ENCODE measurements at regions of chr2 and their contacts with region 1.

Region 1: DNA sequence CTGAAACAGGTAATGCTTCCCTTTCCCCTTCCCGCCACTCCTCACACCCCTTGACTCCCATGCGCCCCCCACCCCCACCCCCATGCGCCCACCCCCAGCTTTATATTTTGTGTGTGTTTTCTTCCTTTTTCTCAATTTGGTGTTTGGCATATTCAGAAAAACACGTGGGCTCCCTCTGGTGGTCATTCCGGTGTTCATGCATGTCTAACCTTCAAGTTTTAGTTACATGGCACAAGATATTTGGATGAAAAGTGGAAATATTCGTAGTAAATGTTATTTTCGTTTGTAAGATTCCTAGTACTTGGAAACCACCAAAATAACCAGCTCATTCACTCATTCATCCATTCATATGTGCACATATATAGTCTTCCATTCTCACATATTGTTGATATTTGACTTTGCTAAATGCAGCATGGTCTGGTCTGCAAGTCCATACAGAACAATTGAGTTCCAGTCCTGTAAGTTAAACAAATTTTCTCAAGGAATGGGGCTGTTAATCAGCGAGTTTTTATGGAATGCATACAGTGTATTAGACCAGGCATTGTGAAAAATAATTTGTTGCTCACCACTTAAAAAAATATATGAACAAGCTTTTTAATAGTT is 143.6 kb upstream of the MAP3K20 start:
- DNase-seq: peak; percentile 10 to 68
- ATAC-seq: peak; percentile 69 to 85; a peak in 3 of 6 replicates
- H3K4me3 ChIP-seq: no peak overlapping the region
- H3K27ac ChIP-seq: no peak overlapping the region
- H3K4me1 ChIP-seq: peaks cover 9% of the 10 kb centered on the region; the same call in 2 of the 3 replicates
- CTCF ChIP-seq: peak; percentile 83
- EP300 ChIP-seq: no peak
- POLR2A ChIP-seq: no peak
- RAD21 ChIP-seq: peak; percentile 81 to 88

Region 2: GRCh38 chr2:172667581-172668325 is 264.3 kb before region 1 on chr2:
- CTCF ChIA-PET with region 1: no interaction called
- POLR2A ChIA-PET with region 1: no interaction called
- DNase-seq: no peak
- ATAC-seq: no peak
- H3K4me3 ChIP-seq: no peak overlapping the region
- H3K27ac ChIP-seq: no peak overlapping the region
- H3K4me1 ChIP-seq: peaks cover 25% of the 10 kb centered on the region
- CTCF ChIP-seq: no peak
- EP300 ChIP-seq: no peak
- POLR2A ChIP-seq: no peak
- RAD21 ChIP-seq: no peak

Region 3: GRCh38 chr2:172806493-172806892 is 125.5 kb before region 1 on chr2:
- CTCF ChIA-PET with region 1: interaction called, 74 read pairs
- POLR2A ChIA-PET with region 1: no interaction called
- DNase-seq: peak; percentile 18 to 68
- ATAC-seq: peak; percentile 73 to 74; a peak in 5 of 6 replicates
- H3K4me3 ChIP-seq: no peak overlapping the region
- H3K27ac ChIP-seq: no peak overlapping the region
- H3K4me1 ChIP-seq: no peaks in the 10 kb centered on the region
- CTCF ChIP-seq: peak; percentile 93
- EP300 ChIP-seq: no peak
- POLR2A ChIP-seq: no peak
- RAD21 ChIP-seq: peak; percentile 91 to 95

Region 4: GRCh38 chr2:172864182-172864581 is 67.8 kb before region 1 on chr2:
- CTCF ChIA-PET with region 1: interaction called, 15 read pairs
- POLR2A ChIA-PET with region 1: no interaction called
- DNase-seq: peak in 1 of 2 experiments; percentile 64
- ATAC-seq: peak; percentile 59 to 89; a peak in 3 of 6 replicates
- H3K4me3 ChIP-seq: no peak overlapping the region
- H3K27ac ChIP-seq: no peak overlapping the region
- H3K4me1 ChIP-seq: no peaks in the 10 kb centered on the region; the same call in 2 of the 3 replicates
- CTCF ChIP-seq: peak; percentile 65
- EP300 ChIP-seq: no peak
- POLR2A ChIP-seq: no peak
- RAD21 ChIP-seq: peak; percentile 75 to 86

Region 5: GRCh38 chr2:172905937-172906811 is 25.8 kb before region 1 on chr2:
- CTCF ChIA-PET with region 1: interaction called, 14 read pairs
- POLR2A ChIA-PET with region 1: no interaction called
- DNase-seq: no peak
- ATAC-seq: no peak
- H3K4me3 ChIP-seq: no peak overlapping the region
- H3K27ac ChIP-seq: no peak overlapping the region
- H3K4me1 ChIP-seq: no peaks in the 10 kb centered on the region
- CTCF ChIP-seq: no peak
- EP300 ChIP-seq: no peak
- POLR2A ChIP-seq: no peak
- RAD21 ChIP-seq: no peak

Region 6: GRCh38 chr2:172943539-172943938 is 11.5 kb after region 1 on chr2:
- CTCF ChIA-PET with region 1: interaction called, 12 read pairs
- POLR2A ChIA-PET with region 1: no interaction called
- DNase-seq: no peak
- ATAC-seq: no peak
- H3K4me3 ChIP-seq: no peak overlapping the region
- H3K27ac ChIP-seq: no peak overlapping the region
- H3K4me1 ChIP-seq: no peaks in the 10 kb centered on the region
- CTCF ChIP-seq: no peak
- EP300 ChIP-seq: no peak
- POLR2A ChIP-seq: no peak
- RAD21 ChIP-seq: no peak

Region 7: DNA sequence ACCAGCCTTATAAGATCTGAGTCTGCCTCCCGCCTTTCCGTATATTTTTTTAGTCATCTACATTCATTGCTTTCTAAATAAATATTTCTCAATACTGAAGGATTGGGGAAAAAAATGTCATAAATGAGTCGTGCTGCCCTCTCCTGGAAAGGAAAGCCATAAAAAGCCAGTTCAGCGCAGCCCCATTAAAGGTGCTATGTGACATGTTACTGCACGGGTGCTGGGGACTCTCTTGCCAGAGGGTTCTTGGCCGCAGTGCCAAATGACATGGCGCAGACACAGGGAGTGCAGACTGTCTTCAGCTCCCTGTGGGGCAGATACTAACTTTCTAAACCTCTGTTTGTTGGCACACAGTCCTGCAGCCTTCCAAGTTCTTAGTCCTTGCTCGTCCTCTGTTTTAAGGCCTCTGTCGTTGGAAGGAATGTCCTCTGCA is 89.9 kb after region 1 on chr2:
- CTCF ChIA-PET with region 1: interaction called, 23 read pairs
- POLR2A ChIA-PET with region 1: no interaction called
- DNase-seq: peak; percentile 35 to 78
- ATAC-seq: peak; percentile 82 to 91; a peak in 4 of 6 replicates
- H3K4me3 ChIP-seq: no peak overlapping the region
- H3K27ac ChIP-seq: peak overlapping the region; percentile 38 to 67; a peak in 5 of 6 replicates
- H3K4me1 ChIP-seq: peaks cover 11% of the 10 kb centered on the region
- CTCF ChIP-seq: peak; percentile 81
- EP300 ChIP-seq: no peak
- POLR2A ChIP-seq: no peak
- RAD21 ChIP-seq: peak; percentile 74 to 86

Region 8: GRCh38 chr2:173271825-173272224 is 339.8 kb after region 1 on chr2:
- CTCF ChIA-PET with region 1: no interaction called
- POLR2A ChIA-PET with region 1: no interaction called
- DNase-seq: peak in 1 of 2 experiments; percentile 13
- ATAC-seq: peak in 1 of 2 experiments; percentile 53; a peak in 4 of 6 replicates
- H3K4me3 ChIP-seq: no peak overlapping the region
- H3K27ac ChIP-seq: no peak overlapping the region
- H3K4me1 ChIP-seq: 0 out of 3 replicates have a peak, but pooled peaks cover 2% of the 10 kb centered on the region
- CTCF ChIP-seq: no peak
- EP300 ChIP-seq: no peak
- POLR2A ChIP-seq: no peak
- RAD21 ChIP-seq: no peak

Measured in A549 (cell line).